Activated CD4-positive, alpha-beta T cell treated with anti-CD3 and anti-CD28 coated beads, Interleukin-2, amount 10 ng/mL, durations not matched to agents 24 days and 14 days (primary cell): ENCODE measurements at regions of chr10 and their contacts with region 1.

Region 1: GRCh38 chr10:3867454-3868270 is 82.7 kb upstream of the KLF6 start:
- DNase-seq: no peak
- H3K4me3 Mint-ChIP-seq: no peak overlapping the region
- H3K27ac Mint-ChIP-seq: peak overlapping the region; percentile 91
- H3K4me1 Mint-ChIP-seq: peaks cover 61% of the 10 kb centered on the region
- H3K27me3 Mint-ChIP-seq: no peaks in the 10 kb centered on the region

Region 2: GRCh38 chr10:3828404-3829155 is 39.1 kb before region 1 on chr10:
- intact Hi-C with region 1: loop called (anchors 2 kb)
- DNase-seq: peak; percentile 78
- H3K4me3 Mint-ChIP-seq: peak overlapping the region; percentile 68
- H3K27ac Mint-ChIP-seq: peak overlapping the region; percentile 92
- H3K4me1 Mint-ChIP-seq: peaks cover 52% of the 10 kb centered on the region
- H3K27me3 Mint-ChIP-seq: no peaks in the 10 kb centered on the region

Region 3: GRCh38 chr10:3835770-3836169 is 31.9 kb before region 1 on chr10:
- intact Hi-C with region 1: loop called (anchors 2 kb)
- DNase-seq: no peak
- H3K4me3 Mint-ChIP-seq: no peak overlapping the region
- H3K27ac Mint-ChIP-seq: peak overlapping the region; percentile 85
- H3K4me1 Mint-ChIP-seq: peaks cover 45% of the 10 kb centered on the region
- H3K27me3 Mint-ChIP-seq: no peaks in the 10 kb centered on the region

Region 4: GRCh38 chr10:3887885-3888476 is 20.3 kb after region 1 on chr10:
- intact Hi-C with region 1: loop called (anchors 2 kb)
- DNase-seq: peak; percentile 83
- H3K4me3 Mint-ChIP-seq: peak overlapping the region; percentile 67
- H3K27ac Mint-ChIP-seq: peak overlapping the region; percentile 94
- H3K4me1 Mint-ChIP-seq: peaks cover 38% of the 10 kb centered on the region
- H3K27me3 Mint-ChIP-seq: no peaks in the 10 kb centered on the region

Region 5: GRCh38 chr10:4678023-4678950 is 810.6 kb after region 1 on chr10:
- intact Hi-C with region 1: no loop called
- DNase-seq: no peak
- H3K4me3 Mint-ChIP-seq: no peak overlapping the region
- H3K27ac Mint-ChIP-seq: no peak overlapping the region
- H3K4me1 Mint-ChIP-seq: no peaks in the 10 kb centered on the region
- H3K27me3 Mint-ChIP-seq: peaks cover 33% of the 10 kb centered on the region